ENCODE measurements at regions of chr6 and their contacts with region 1.

Region 1: GRCh38 chr6:41027799-41028628 is 11.0 kb downstream of the UNC5CL start:
- DNase-seq: peak; percentile 82
- ATAC-seq: peak; percentile 89
- H3K4me3 Mint-ChIP-seq: peak overlapping the region; percentile 81
- H3K27ac Mint-ChIP-seq: peak overlapping the region; percentile 82
- H3K4me1 Mint-ChIP-seq: peaks cover 21% of the 10 kb centered on the region
- H3K27me3 Mint-ChIP-seq: no peaks in the 10 kb centered on the region

Region 2: DNA sequence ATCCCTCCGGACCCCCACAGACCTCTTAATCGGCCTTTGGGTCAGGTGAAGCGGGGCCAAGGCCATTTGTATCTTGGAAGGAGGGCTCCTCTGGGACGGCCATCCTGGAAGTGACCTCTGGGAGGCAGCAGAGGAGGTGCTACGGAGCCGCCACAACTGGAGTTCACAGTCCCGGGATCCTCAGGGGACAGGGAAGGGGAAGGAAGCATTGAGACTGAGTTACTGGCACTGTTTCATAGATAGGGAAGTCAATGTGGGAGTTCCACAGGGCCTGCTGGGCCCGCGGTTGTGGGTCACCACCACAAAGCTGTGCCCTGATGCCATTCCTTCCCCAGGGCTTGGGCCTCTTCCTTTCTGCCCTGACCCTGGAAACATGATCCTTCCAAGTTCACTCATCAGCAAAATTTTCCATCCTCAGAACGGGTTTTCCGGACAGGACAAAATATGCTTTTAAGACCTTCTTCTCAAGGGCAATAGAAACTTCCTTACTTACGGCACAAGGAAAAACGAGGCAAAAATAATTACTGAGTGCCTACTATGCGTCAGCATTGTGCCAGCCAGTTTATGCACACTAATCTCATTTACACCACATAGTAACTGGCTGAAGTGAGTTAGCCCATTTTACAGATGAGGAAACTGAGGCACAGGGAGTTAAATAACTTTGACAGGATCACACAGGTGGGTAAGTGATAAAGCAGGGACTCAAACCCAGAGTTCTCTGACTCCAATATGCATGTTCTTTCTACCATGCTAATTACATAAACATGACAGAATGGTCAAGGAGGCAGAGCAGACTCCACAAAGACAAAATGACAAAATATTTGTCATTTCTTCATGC is 132.8 kb before region 1 on chr6:
- CTCF ChIA-PET with region 1: no interaction called
- POLR2A ChIA-PET with region 1: no interaction called
- DNase-seq: no peak
- ATAC-seq: no peak
- H3K4me3 Mint-ChIP-seq: no peak overlapping the region
- H3K27ac Mint-ChIP-seq: no peak overlapping the region
- H3K4me1 Mint-ChIP-seq: no peaks in the 10 kb centered on the region
- H3K27me3 Mint-ChIP-seq: peaks cover 4% of the 10 kb centered on the region

Region 3: DNA sequence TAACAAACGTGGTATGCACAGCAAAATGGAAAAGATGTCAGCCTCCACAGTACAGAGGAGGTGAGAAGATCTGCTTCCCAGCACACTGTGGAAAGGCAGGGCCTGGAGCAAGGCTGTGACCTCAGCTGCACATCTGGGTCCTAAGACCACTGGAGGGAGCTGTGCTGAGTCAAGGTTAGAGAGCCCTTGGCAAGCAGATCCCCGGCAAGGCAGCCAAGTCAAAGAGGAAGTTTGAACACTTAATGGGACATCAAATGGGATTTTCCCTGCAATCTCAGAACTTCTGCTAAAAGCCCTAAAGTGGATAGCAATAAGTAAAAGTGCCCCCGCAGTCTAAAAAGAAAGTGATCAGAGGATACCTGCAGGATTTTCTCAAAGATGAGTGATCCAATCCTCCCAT is 28.4 kb before region 1 on chr6:
- CTCF ChIA-PET with region 1: interaction called, 19 read pairs
- POLR2A ChIA-PET with region 1: no interaction called
- DNase-seq: peak; percentile 30
- ATAC-seq: peak; percentile 68
- H3K4me3 Mint-ChIP-seq: no peak overlapping the region
- H3K27ac Mint-ChIP-seq: no peak overlapping the region
- H3K4me1 Mint-ChIP-seq: no peaks in the 10 kb centered on the region
- H3K27me3 Mint-ChIP-seq: peaks cover 46% of the 10 kb centered on the region

Region 4: GRCh38 chr6:41008011-41008410 is 20.0 kb before region 1 on chr6:
- CTCF ChIA-PET with region 1: interaction called, 18 read pairs
- POLR2A ChIA-PET with region 1: no interaction called
- DNase-seq: no peak
- ATAC-seq: no peak
- H3K4me3 Mint-ChIP-seq: no peak overlapping the region
- H3K27ac Mint-ChIP-seq: no peak overlapping the region
- H3K4me1 Mint-ChIP-seq: peaks cover 2% of the 10 kb centered on the region
- H3K27me3 Mint-ChIP-seq: peaks cover 20% of the 10 kb centered on the region

Region 5: GRCh38 chr6:41017663-41018062 is 10.4 kb before region 1 on chr6:
- CTCF ChIA-PET with region 1: interaction called, 31 read pairs
- POLR2A ChIA-PET with region 1: interaction called, 9 read pairs
- DNase-seq: no peak
- ATAC-seq: no peak
- H3K4me3 Mint-ChIP-seq: no peak overlapping the region
- H3K27ac Mint-ChIP-seq: no peak overlapping the region
- H3K4me1 Mint-ChIP-seq: no peaks in the 10 kb centered on the region
- H3K27me3 Mint-ChIP-seq: no peaks in the 10 kb centered on the region

Region 6: DNA sequence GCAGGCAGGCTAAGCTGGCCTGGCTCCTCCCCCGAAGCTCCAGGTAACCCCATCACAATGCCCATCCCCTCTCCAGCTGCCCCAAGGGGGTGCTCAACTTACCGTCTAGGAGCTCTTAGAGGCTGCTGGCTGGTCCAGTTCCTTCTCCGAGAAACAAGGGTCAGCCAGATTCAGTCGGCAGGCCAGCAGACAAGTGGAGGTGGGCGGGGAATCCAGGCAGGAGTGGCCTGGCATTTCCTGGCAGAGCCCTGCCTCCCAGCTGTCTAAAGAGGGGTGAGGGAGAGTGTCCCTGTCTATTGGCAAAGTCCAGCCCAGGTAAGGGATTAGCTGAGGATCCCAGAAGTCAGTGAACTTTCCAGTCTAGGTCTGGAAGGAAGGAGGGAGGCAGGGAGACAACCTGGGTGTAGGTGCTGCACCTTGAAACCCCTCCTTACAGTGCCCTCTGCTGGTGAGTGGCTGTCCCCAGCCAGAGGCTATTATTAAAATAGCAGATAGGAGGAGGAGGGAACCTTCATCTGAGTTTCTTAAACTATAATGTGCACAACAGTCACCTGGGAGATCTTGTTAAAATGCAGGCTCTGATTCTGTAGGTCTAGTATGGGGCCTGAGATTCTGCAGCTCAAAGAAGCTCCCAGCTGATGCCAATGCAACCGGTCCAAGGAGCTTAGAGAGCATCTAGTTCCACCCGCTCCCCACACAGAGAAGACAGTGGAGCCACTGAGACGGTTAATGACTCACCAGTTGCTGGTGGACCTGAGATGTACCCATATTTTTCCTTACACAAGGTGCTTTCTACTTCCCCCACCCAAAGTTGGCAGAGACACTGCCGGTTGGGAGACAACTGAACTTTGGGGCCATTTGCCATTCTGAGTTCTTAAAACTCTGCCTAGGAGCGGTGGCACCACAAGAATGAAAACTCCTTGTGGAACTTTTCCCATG is 11.3 kb after region 1 on chr6 and contains the start of gene UNC5CL:
- CTCF ChIA-PET with region 1: interaction called, 130 read pairs
- POLR2A ChIA-PET with region 1: interaction called, 11 read pairs
- DNase-seq: peak; percentile 79
- ATAC-seq: peak; percentile 89
- H3K4me3 Mint-ChIP-seq: no peak within 1 kb of the TSS
- H3K27ac Mint-ChIP-seq: no peak within 1 kb of the TSS
- H3K4me1 Mint-ChIP-seq: peaks cover 12% of the 10 kb centered on the region
- H3K27me3 Mint-ChIP-seq: no peaks in the 10 kb centered on the region
- total RNA-seq, gene UNC5CL: 1.1 TPM

Region 7: GRCh38 chr6:41051873-41052272 is 23.9 kb after region 1 on chr6:
- CTCF ChIA-PET with region 1: interaction called, 27 read pairs
- POLR2A ChIA-PET with region 1: interaction called, 10 read pairs
- DNase-seq: no peak
- ATAC-seq: peak; percentile 75
- H3K4me3 Mint-ChIP-seq: no peak overlapping the region
- H3K27ac Mint-ChIP-seq: peak overlapping the region; percentile 89
- H3K4me1 Mint-ChIP-seq: peaks cover 21% of the 10 kb centered on the region
- H3K27me3 Mint-ChIP-seq: no peaks in the 10 kb centered on the region

Region 8: DNA sequence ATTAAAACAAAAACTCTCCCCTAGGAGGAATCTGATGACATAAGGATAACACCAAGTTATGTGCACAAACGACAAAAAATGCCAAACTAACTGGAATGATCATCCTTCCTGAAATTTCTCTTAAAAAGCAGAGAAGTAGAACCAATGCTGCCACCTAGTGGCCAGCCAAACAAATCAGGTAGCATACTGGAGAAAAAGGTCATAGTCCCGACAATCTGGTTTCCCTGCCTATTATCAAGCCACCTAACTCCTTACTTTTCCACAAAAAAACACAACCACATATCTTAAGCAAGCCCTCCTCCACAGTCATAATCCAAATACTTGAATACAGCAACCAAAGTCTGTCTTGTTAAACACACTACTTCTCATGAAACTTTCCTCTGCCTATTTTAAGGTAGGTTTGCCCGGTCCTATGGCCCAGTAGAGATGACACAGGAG is 38.9 kb after region 1 on chr6:
- CTCF ChIA-PET with region 1: interaction called, 29 read pairs
- POLR2A ChIA-PET with region 1: interaction called, 5 read pairs
- DNase-seq: peak; percentile 81
- ATAC-seq: no peak
- H3K4me3 Mint-ChIP-seq: no peak overlapping the region
- H3K27ac Mint-ChIP-seq: no peak overlapping the region
- H3K4me1 Mint-ChIP-seq: peaks cover 37% of the 10 kb centered on the region
- H3K27me3 Mint-ChIP-seq: no peaks in the 10 kb centered on the region

Region 9: GRCh38 chr6:41097467-41098090 is 69.6 kb after region 1 on chr6:
- CTCF ChIA-PET with region 1: no interaction called
- POLR2A ChIA-PET with region 1: no interaction called
- DNase-seq: no peak
- ATAC-seq: no peak
- H3K4me3 Mint-ChIP-seq: no peak overlapping the region
- H3K27ac Mint-ChIP-seq: peak overlapping the region; percentile 47
- H3K4me1 Mint-ChIP-seq: peaks cover 18% of the 10 kb centered on the region
- H3K27me3 Mint-ChIP-seq: no peaks in the 10 kb centered on the region